ENCODE measurements at regions of chr2 and their contacts with region 1.

Region 1: DNA sequence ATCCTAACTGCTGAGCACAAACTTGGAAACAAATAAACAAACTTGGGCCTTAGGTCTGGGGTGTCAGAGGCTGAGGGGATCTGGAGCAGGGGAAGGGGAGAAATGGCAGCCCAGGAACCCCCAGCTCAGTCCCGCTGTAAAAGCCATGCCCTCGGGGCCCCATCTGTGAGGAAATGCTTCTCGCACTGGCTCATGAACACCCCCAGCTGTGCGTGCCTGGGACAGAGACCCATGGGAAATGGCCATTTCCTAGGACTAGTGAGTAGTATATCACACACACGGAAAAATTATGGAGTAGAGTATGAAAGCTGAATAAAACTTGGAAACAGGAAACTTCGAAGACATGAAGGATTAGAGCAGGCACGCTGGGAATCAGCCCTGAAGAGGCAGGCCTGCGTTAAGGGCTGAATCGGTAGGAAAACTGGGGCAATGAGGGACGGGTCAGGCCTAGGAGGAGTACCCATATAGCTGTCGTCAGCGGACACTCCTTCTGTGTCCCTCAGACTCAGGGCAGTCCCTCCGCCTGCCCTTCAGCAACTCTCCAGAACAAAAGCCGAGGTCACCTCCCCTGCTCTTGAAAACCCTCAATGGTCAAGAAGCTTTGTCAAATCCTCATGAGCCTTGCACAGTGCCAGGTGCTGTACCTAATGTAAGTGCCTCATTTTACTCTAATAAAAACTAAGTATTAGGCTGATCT is 120.8 kb upstream of the ODC1 start:
- DNase-seq: no peak
- ATAC-seq: no peak
- H3K4me3 ChIP-seq: no peak overlapping the region
- H3K4me3 Mint-ChIP-seq: no peak overlapping the region
- H3K27ac ChIP-seq: no peak overlapping the region
- H3K27ac Mint-ChIP-seq: no peak overlapping the region
- H3K4me1 ChIP-seq: no peaks in the 10 kb centered on the region
- H3K4me1 Mint-ChIP-seq: peaks cover 0 to 2% (median 0%) of the 10 kb centered on the region in 3 donors
- H3K27me3 ChIP-seq: no peaks in the 10 kb centered on the region
- H3K27me3 Mint-ChIP-seq: no peaks in the 10 kb centered on the region

Region 2: DNA sequence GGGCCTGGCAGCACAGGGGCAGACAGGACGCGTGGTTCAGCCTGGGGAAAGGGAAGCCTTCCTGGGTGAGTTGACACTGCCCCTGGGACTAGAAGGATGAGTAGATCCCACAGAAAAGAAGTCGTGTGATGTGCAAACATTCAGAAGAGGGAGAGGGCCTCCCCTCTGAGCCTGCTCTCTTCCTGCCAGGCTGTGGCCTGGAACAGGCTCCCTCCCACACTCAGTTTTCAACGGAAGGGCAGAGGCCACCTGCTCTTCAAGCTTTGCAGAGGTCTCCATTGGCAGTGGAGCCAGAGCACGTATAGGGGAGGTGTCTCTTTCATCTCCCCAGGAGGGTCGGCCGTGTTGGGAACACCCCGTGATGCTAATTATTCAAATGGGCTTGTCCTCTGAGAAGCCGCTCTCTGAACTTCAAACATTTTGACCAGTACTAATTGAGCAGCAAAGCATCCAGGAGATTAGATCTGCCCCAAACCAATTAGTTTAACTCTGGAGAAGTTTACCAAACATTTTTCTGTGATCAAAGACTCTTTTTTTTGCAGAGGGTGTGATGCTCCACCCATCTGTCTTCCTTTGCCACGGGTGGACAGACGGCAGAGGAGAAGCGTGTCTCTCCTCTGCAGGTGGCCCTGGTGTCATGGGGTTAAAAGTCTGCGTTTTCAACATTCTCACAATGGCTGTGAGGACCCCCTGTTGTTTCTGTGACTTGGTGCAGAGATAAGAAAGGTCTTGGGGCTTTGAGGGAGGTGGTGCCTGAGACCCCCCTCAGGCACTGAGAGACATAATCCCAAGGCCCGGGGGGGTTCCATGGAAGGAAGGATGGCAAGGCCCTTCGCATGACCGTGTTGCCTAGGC is 91.2 kb before region 1 on chr2:
- CTCF ChIA-PET with region 1: no interaction called
- POLR2A ChIA-PET with region 1: interaction called in 1 of 2 experiments, 11 read pairs
- DNase-seq: no peak
- ATAC-seq: peak in 3 of 4 experiments; percentile 29 to 38 (median 38)
- H3K4me3 ChIP-seq: no peak overlapping the region
- H3K4me3 Mint-ChIP-seq: peak overlapping the region in 1 of 3 donors; percentile 2
- H3K27ac ChIP-seq: no peak overlapping the region
- H3K27ac Mint-ChIP-seq: peak overlapping the region in 1 of 2 donors; percentile 56
- H3K4me1 ChIP-seq: peaks cover 0 to 8% of the 10 kb centered on the region in 2 experiments
- H3K4me1 Mint-ChIP-seq: peaks cover 9 to 24% (median 21%) of the 10 kb centered on the region in 3 donors
- H3K27me3 ChIP-seq: peaks cover 0 to 21% of the 10 kb centered on the region in 2 experiments
- H3K27me3 Mint-ChIP-seq: peaks cover 0 to 14% of the 10 kb centered on the region in 2 donors

Region 3: DNA sequence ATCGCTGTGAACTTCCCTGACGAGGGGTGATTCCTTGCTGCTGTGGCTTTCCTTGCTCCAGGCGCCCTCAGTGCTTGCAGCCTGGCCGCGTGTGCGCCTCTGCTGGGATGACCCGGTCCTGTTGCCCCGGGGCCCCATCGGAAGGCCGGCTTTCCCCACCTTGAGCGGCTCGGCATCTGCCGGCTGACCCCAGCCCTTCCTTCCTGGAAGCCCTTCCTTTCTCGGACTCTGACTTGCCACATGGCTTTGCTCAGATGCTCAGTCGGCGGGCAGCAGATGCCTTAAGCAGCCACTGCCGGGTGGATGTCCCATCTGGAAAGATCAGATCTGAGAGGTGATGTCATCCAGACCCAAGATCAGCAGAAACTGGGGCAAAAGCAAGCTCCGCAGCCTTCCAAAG is 20.3 kb before region 1 on chr2:
- CTCF ChIA-PET with region 1: no interaction called
- POLR2A ChIA-PET with region 1: no interaction called
- DNase-seq: no peak
- ATAC-seq: no peak
- H3K4me3 ChIP-seq: no peak overlapping the region
- H3K4me3 Mint-ChIP-seq: peak overlapping the region in 1 of 3 donors; percentile 24
- H3K27ac ChIP-seq: no peak overlapping the region
- H3K27ac Mint-ChIP-seq: no peak overlapping the region
- H3K4me1 ChIP-seq: peaks cover 0 to 20% of the 10 kb centered on the region in 2 experiments
- H3K4me1 Mint-ChIP-seq: peaks cover 16 to 21% (median 19%) of the 10 kb centered on the region in 3 donors
- H3K27me3 ChIP-seq: peaks cover 0 to 54% of the 10 kb centered on the region in 2 experiments
- H3K27me3 Mint-ChIP-seq: peaks cover 31 to 42% of the 10 kb centered on the region in 2 donors

Region 4: GRCh38 chr2:12131975-12132374 is 1563.1 kb after region 1 on chr2:
- CTCF ChIA-PET with region 1: no interaction called
- POLR2A ChIA-PET with region 1: no interaction called
- DNase-seq: no peak
- ATAC-seq: no peak
- H3K4me3 ChIP-seq: no peak overlapping the region
- H3K4me3 Mint-ChIP-seq: no peak overlapping the region
- H3K27ac ChIP-seq: no peak overlapping the region
- H3K27ac Mint-ChIP-seq: no peak overlapping the region
- H3K4me1 ChIP-seq: peaks cover 27 to 38% of the 10 kb centered on the region in 2 experiments
- H3K4me1 Mint-ChIP-seq: no peaks in the 10 kb centered on the region
- H3K27me3 ChIP-seq: no peaks in the 10 kb centered on the region
- H3K27me3 Mint-ChIP-seq: no peaks in the 10 kb centered on the region

Measured in T-cell (primary cell).